ENCODE measurements at regions of chr2 and their contacts with region 1.

Region 1: GRCh38 chr2:233443468-233444183 is 89.3 kb downstream of the DGKD start:
- DNase-seq: peak; percentile 60 to 62
- H3K4me3 ChIP-seq: no peak overlapping the region
- H3K4me3 Mint-ChIP-seq: no peak overlapping the region
- H3K27ac Mint-ChIP-seq: peak overlapping the region; percentile 65
- H3K4me1 ChIP-seq: peaks cover 8% of the 10 kb centered on the region
- H3K4me1 Mint-ChIP-seq: peaks cover 7% of the 10 kb centered on the region
- H3K27me3 ChIP-seq: no peaks in the 10 kb centered on the region
- H3K27me3 Mint-ChIP-seq: no peaks in the 10 kb centered on the region
- CTCF ChIP-seq: peak; percentile 43 to 63

Region 2: GRCh38 chr2:233353769-233354499 is 89.7 kb before region 1 on chr2 and contains the start of gene DGKD:
- CTCF ChIA-PET with region 1: no interaction called
- POLR2A ChIA-PET with region 1: no interaction called
- intact Hi-C with region 1: loop called (anchors 10 kb)
- DNase-seq: peak; percentile 88 to 93
- H3K4me3 ChIP-seq: peak within 1 kb of the TSS; percentile 83
- H3K4me3 Mint-ChIP-seq: peak within 1 kb of the TSS; percentile 71
- H3K27ac Mint-ChIP-seq: peak within 1 kb of the TSS; percentile 68
- H3K4me1 ChIP-seq: peaks cover 66% of the 10 kb centered on the region
- H3K4me1 Mint-ChIP-seq: peaks cover 40% of the 10 kb centered on the region
- H3K27me3 ChIP-seq: no peaks in the 10 kb centered on the region
- H3K27me3 Mint-ChIP-seq: no peaks in the 10 kb centered on the region
- CTCF ChIP-seq: peak in 1 of 2 experiments; percentile 30
- total RNA-seq, gene DGKD: 105 and 108 TPM in 2 replicates

Region 3: GRCh38 chr2:233404222-233404621 is 39.4 kb before region 1 on chr2:
- CTCF ChIA-PET with region 1: interaction called, 7 read pairs
- POLR2A ChIA-PET with region 1: no interaction called
- intact Hi-C with region 1: loop called (anchors 1 kb)
- DNase-seq: peak in 1 of 2 experiments; percentile 49
- H3K4me3 ChIP-seq: no peak overlapping the region
- H3K4me3 Mint-ChIP-seq: no peak overlapping the region
- H3K27ac Mint-ChIP-seq: peak overlapping the region; percentile 58
- H3K4me1 ChIP-seq: no peaks in the 10 kb centered on the region
- H3K4me1 Mint-ChIP-seq: peaks cover 20% of the 10 kb centered on the region
- H3K27me3 ChIP-seq: no peaks in the 10 kb centered on the region
- H3K27me3 Mint-ChIP-seq: no peaks in the 10 kb centered on the region
- CTCF ChIP-seq: peak; percentile 46 to 75